Naive thymus-derived CD4-positive, alpha-beta T cell (primary cell): ENCODE measurements at regions of chr11 and their contacts with region 1.

Region 1: DNA sequence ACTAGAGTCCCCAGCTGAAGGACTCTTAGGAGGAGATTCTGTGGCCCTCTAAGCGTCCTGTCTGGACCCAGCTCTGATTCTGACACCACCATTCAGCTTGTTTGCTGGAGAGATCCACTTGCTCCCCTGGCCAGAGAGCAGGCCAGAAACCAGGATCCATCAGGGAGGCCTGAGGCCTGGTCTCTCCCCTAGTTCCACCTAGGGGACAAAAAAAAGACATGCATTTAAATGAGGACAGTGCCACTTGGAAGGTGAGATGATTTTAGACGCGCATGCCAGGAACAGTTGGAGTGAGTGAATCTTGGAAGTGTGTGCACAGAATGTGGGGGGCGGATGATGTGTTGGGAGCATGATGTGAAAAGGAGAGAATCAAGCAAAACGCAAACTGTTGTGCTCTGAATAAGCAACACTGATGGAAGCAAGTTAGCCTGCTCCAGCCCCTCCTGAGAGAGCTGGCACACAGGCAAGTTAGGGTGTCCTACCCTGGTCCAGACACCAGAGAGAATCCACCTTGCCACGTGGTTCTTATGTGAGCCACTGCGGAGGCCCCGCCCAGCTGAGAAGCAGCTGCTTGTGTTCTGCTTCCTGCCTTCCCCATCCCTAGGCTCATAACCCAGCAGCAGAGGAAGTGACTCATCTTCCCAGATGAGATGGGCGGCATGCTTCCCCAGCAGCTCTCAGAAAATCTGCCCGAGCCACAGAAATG is 8.0 kb upstream of the SLCO2B1 start:
- DNase-seq: peak; percentile 24 to 75 (median 48)
- ATAC-seq: peak; percentile 89
- H3K4me3 ChIP-seq: peak overlapping the region; percentile 29
- H3K4me3 Mint-ChIP-seq: peak overlapping the region; percentile 21 to 84 (median 52)
- H3K27ac ChIP-seq: peak overlapping the region; percentile 49
- H3K27ac Mint-ChIP-seq: peak overlapping the region; percentile 71 to 92 (median 88)
- H3K4me1 ChIP-seq: peaks cover 20 to 24% of the 10 kb centered on the region in 2 donors
- H3K4me1 Mint-ChIP-seq: peaks cover 32 to 48% (median 40%) of the 10 kb centered on the region in 7 donors
- H3K27me3 ChIP-seq: no peaks in the 10 kb centered on the region
- H3K27me3 Mint-ChIP-seq: peaks cover 0 to 14% (median 0%) of the 10 kb centered on the region in 5 donors

Region 2: GRCh38 chr11:74929431-74930363 is 213.2 kb before region 1 on chr11:
- CTCF ChIA-PET with region 1: interaction called, 4 read pairs
- POLR2A ChIA-PET with region 1: no interaction called
- intact Hi-C with region 1: loop called (anchors 1 to 2 kb)
- DNase-seq: peak; percentile 9 to 74 (median 59)
- ATAC-seq: peak; percentile 92
- H3K4me3 ChIP-seq: no peak overlapping the region
- H3K4me3 Mint-ChIP-seq: no peak overlapping the region
- H3K27ac ChIP-seq: no peak overlapping the region
- H3K27ac Mint-ChIP-seq: no peak overlapping the region
- H3K4me1 ChIP-seq: no peaks in the 10 kb centered on the region
- H3K4me1 Mint-ChIP-seq: peaks cover 0 to 36% (median 0%) of the 10 kb centered on the region in 7 donors
- H3K27me3 ChIP-seq: no peaks in the 10 kb centered on the region
- H3K27me3 Mint-ChIP-seq: no peaks in the 10 kb centered on the region

Region 3: GRCh38 chr11:74988541-74989260 is 154.2 kb before region 1 on chr11 and contains the start of gene NEU3:
- CTCF ChIA-PET with region 1: no interaction called
- POLR2A ChIA-PET with region 1: no interaction called
- intact Hi-C with region 1: loop called in 1 of 2 experiments (anchors 1 kb)
- DNase-seq: peak; percentile 64 to 82 (median 78)
- ATAC-seq: peak; percentile 97
- H3K4me3 ChIP-seq: peak within 1 kb of the TSS; percentile 96
- H3K4me3 Mint-ChIP-seq: peak within 1 kb of the TSS; percentile 88 to 97 (median 93)
- H3K27ac ChIP-seq: peak within 1 kb of the TSS; percentile 81
- H3K27ac Mint-ChIP-seq: peak within 1 kb of the TSS; percentile 75 to 94 (median 89)
- H3K4me1 ChIP-seq: peaks cover 8 to 16% of the 10 kb centered on the region in 2 donors
- H3K4me1 Mint-ChIP-seq: peaks cover 16 to 37% (median 31%) of the 10 kb centered on the region in 7 donors
- H3K27me3 ChIP-seq: no peaks in the 10 kb centered on the region
- H3K27me3 Mint-ChIP-seq: no peaks in the 10 kb centered on the region
- total RNA-seq, gene NEU3: 12.6 to 18.9 (median 16.1) TPM

Region 4: GRCh38 chr11:75174781-75175370 is 32.0 kb after region 1 on chr11:
- CTCF ChIA-PET with region 1: no interaction called
- POLR2A ChIA-PET with region 1: no interaction called
- intact Hi-C with region 1: loop called in 1 of 2 experiments (anchors 2 kb)
- DNase-seq: no peak
- ATAC-seq: peak; percentile 82
- H3K4me3 ChIP-seq: no peak overlapping the region
- H3K4me3 Mint-ChIP-seq: peak overlapping the region in 1 of 10 donors; percentile 55
- H3K27ac ChIP-seq: peak overlapping the region; percentile 10
- H3K27ac Mint-ChIP-seq: peak overlapping the region in 7 of 9 donors; percentile 0 to 76 (median 14)
- H3K4me1 ChIP-seq: no peaks in the 10 kb centered on the region
- H3K4me1 Mint-ChIP-seq: peaks cover 6 to 17% (median 13%) of the 10 kb centered on the region in 7 donors
- H3K27me3 ChIP-seq: no peaks in the 10 kb centered on the region
- H3K27me3 Mint-ChIP-seq: peaks cover 0 to 3% (median 0%) of the 10 kb centered on the region in 5 donors

Region 5: GRCh38 chr11:75241036-75241905 is 98.4 kb after region 1 on chr11:
- CTCF ChIA-PET with region 1: interaction called, 162 read pairs
- POLR2A ChIA-PET with region 1: interaction called, 14 read pairs
- intact Hi-C with region 1: loop called (anchors 1 kb)
- DNase-seq: peak; percentile 71 to 95 (median 86)
- ATAC-seq: peak; percentile 98
- H3K4me3 ChIP-seq: peak overlapping the region; percentile 54
- H3K4me3 Mint-ChIP-seq: peak overlapping the region; percentile 59 to 85 (median 75)
- H3K27ac ChIP-seq: no peak overlapping the region
- H3K27ac Mint-ChIP-seq: no peak overlapping the region
- H3K4me1 ChIP-seq: peaks cover 5 to 15% of the 10 kb centered on the region in 2 donors
- H3K4me1 Mint-ChIP-seq: peaks cover 0 to 14% (median 10%) of the 10 kb centered on the region in 7 donors
- H3K27me3 ChIP-seq: peaks cover 3 to 5% of the 10 kb centered on the region in 2 donors
- H3K27me3 Mint-ChIP-seq: peaks cover 13 to 68% (median 27%) of the 10 kb centered on the region in 5 donors

Region 6: GRCh38 chr11:75270896-75271418 is 128.1 kb after region 1 on chr11:
- CTCF ChIA-PET with region 1: interaction called, 185 read pairs
- POLR2A ChIA-PET with region 1: interaction called, 57 read pairs
- intact Hi-C with region 1: loop called in 1 of 2 experiments (anchors 1 kb)
- DNase-seq: peak in 7 of 9 donors; percentile 13 to 50 (median 44)
- ATAC-seq: no peak
- H3K4me3 ChIP-seq: no peak overlapping the region
- H3K4me3 Mint-ChIP-seq: peak overlapping the region in 3 of 10 donors; percentile 6 to 47 (median 45)
- H3K27ac ChIP-seq: no peak overlapping the region
- H3K27ac Mint-ChIP-seq: peak overlapping the region in 8 of 9 donors; percentile 82 to 99 (median 94)
- H3K4me1 ChIP-seq: peaks cover 22 to 36% of the 10 kb centered on the region in 2 donors
- H3K4me1 Mint-ChIP-seq: peaks cover 24 to 57% (median 41%) of the 10 kb centered on the region in 7 donors
- H3K27me3 ChIP-seq: no peaks in the 10 kb centered on the region
- H3K27me3 Mint-ChIP-seq: no peaks in the 10 kb centered on the region

Region 7: GRCh38 chr11:75383246-75383645 is 240.4 kb after region 1 on chr11:
- CTCF ChIA-PET with region 1: interaction called, 13 read pairs
- POLR2A ChIA-PET with region 1: no interaction called
- intact Hi-C with region 1: loop called (anchors 1 to 5 kb)
- DNase-seq: peak in 7 of 9 donors; percentile 30 to 55 (median 41)
- ATAC-seq: peak; percentile 78
- H3K4me3 ChIP-seq: no peak overlapping the region
- H3K4me3 Mint-ChIP-seq: peak overlapping the region; percentile 15 to 80 (median 58)
- H3K27ac ChIP-seq: peak overlapping the region; percentile 57
- H3K27ac Mint-ChIP-seq: peak overlapping the region; percentile 65 to 93 (median 88)
- H3K4me1 ChIP-seq: peaks cover 6 to 17% of the 10 kb centered on the region in 2 donors
- H3K4me1 Mint-ChIP-seq: peaks cover 16 to 31% (median 25%) of the 10 kb centered on the region in 7 donors
- H3K27me3 ChIP-seq: no peaks in the 10 kb centered on the region
- H3K27me3 Mint-ChIP-seq: peaks cover 0 to 10% (median 0%) of the 10 kb centered on the region in 5 donors